Mucosa of descending colon (tissue), 3 donors: ENCODE measurements at regions of chr12 and their contacts with region 1.

Region 1: GRCh38 chr12:39272871-39273770 is 169.8 kb downstream of the KIF21A start:
- DNase-seq: peak in 1 of 3 donors; percentile 77
- ATAC-seq: peak; percentile 56
- H3K4me3 ChIP-seq: no peak overlapping the region
- H3K4me1 ChIP-seq: no peaks in the 10 kb centered on the region
- CTCF ChIP-seq: peak; percentile 61

Region 2: GRCh38 chr12:38921025-38921677 is 352.0 kb before region 1 on chr12:
- intact Hi-C with region 1: loop called in 1 of 2 experiments (anchors 10 kb)
- DNase-seq: peak in 2 of 3 donors; percentile 35 to 87
- ATAC-seq: peak; percentile 84
- H3K4me3 ChIP-seq: no peak overlapping the region
- H3K4me1 ChIP-seq: no peaks in the 10 kb centered on the region
- CTCF ChIP-seq: no peak

Region 3: GRCh38 chr12:39145175-39145999 is 127.7 kb before region 1 on chr12:
- intact Hi-C with region 1: loop called (anchors 5 kb)
- DNase-seq: peak; percentile 68 to 86 (median 81)
- ATAC-seq: peak; percentile 100
- H3K4me3 ChIP-seq: no peak overlapping the region
- H3K4me1 ChIP-seq: no peaks in the 10 kb centered on the region
- CTCF ChIP-seq: peak; percentile 36

Region 4: GRCh38 chr12:39237004-39237403 is 36.1 kb before region 1 on chr12:
- intact Hi-C with region 1: no loop called
- DNase-seq: no peak
- ATAC-seq: peak; percentile 38
- H3K4me3 ChIP-seq: no peak overlapping the region
- H3K4me1 ChIP-seq: peaks cover 14% of the 10 kb centered on the region
- CTCF ChIP-seq: no peak